Ascending aorta (tissue), 2 donors: ENCODE measurements at regions of chr16 and their contacts with region 1.

Region 1: DNA sequence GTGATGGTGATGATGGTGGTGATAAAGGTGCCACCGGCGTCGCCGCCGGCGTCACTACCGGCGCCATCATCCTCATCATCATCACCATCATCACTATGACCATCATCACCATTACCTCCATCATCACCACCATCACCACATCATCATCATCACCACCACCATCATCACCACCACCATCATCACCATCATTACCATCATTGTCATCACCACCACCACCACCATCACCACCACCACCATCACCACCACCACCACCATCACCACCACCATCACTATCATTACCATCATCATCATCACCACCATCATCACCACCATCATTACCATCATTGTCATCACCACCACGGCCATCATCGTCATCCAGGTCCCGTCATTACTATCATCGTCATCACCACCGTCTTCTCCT is 179.7 kb downstream of the NPIPB11 start:
- DNase-seq: no peak
- H3K4me3 ChIP-seq: no peak overlapping the region
- H3K27ac ChIP-seq: no peak overlapping the region
- H3K4me1 ChIP-seq: no peaks in the 10 kb centered on the region
- H3K27me3 ChIP-seq: no peaks in the 10 kb centered on the region
- CTCF ChIP-seq: no peak

Region 2: DNA sequence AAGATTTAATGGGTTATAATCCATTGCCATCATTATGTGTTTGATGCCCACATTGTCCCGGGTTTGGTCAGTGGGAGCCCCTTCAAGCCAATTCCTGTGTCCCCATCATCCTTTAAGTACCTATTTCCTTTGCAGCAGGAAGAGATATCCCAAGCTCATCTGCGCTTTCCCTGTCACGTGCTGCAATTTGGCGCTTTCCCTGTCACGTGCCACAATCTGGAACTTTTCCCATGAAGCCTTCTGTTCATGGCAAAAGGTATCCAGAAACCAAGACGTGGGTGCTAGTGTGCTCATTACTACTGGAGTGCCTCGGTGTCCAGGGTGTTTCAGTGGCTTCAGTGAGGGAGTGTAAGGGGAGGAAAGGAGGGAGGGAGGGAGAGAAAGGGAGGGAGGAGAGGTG is 11.2 kb after region 1 on chr16:
- intact Hi-C with region 1: no loop called
- DNase-seq: peak in 1 of 2 donors; percentile 16
- H3K4me3 ChIP-seq: no peak overlapping the region
- H3K27ac ChIP-seq: no peak overlapping the region
- H3K4me1 ChIP-seq: no peaks in the 10 kb centered on the region
- H3K27me3 ChIP-seq: no peaks in the 10 kb centered on the region
- CTCF ChIP-seq: no peak

Region 3: GRCh38 chr16:29310852-29311314 is 84.1 kb after region 1 on chr16:
- intact Hi-C with region 1: loop called (anchors 5 kb)
- DNase-seq: no peak
- H3K4me3 ChIP-seq: no peak overlapping the region
- H3K27ac ChIP-seq: peak overlapping the region; percentile 2 to 46
- H3K4me1 ChIP-seq: no peaks in the 10 kb centered on the region
- H3K27me3 ChIP-seq: no peaks in the 10 kb centered on the region
- CTCF ChIP-seq: peak in 2 of 3 experiments; percentile 18 to 38